IMR-90 (cell line): ENCODE measurements at regions of chr3 and their contacts with region 1.

Region 1: GRCh38 chr3:87766726-87767125 is 292.1 kb downstream of the CGGBP1 start:
- DNase-seq: no peak
- ATAC-seq: no peak
- H3K4me3 ChIP-seq: no peak overlapping the region
- H3K27ac ChIP-seq: no peak overlapping the region
- H3K4me1 ChIP-seq: no peaks in the 10 kb centered on the region
- H3K27me3 ChIP-seq: no peaks in the 10 kb centered on the region
- CTCF ChIP-seq: no peak
- POLR2A ChIP-seq: no peak
- RAD21 ChIP-seq: no peak

Region 2: DNA sequence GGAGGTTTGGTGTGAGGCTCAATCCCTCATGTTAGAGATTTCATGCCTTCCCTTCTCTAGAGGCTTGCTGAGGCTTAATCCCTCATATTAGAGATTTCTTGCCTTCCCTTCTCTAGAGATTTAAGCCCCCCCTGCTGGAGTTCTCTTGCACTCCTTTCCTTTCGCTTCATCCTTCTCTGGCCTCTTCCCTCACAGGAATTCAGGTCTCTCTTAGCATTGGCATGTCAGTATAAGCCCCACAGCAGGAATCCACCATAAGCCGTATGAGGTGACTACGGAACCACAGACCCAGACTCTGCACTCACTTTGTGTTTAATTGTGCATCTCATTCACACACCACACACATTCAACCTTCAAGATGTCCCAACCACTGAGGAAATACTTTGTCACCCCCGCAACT is 151.7 kb before region 1 on chr3:
- CTCF ChIA-PET with region 1: no interaction called
- POLR2A ChIA-PET with region 1: no interaction called
- dilution Hi-C with region 1: no loop called
- in situ Hi-C with region 1: no loop called
- intact Hi-C with region 1: loop called (anchors 2 kb)
- DNase-seq: no peak
- ATAC-seq: no peak
- H3K4me3 ChIP-seq: no peak overlapping the region
- H3K27ac ChIP-seq: no peak overlapping the region
- H3K4me1 ChIP-seq: no peaks in the 10 kb centered on the region
- H3K27me3 ChIP-seq: no peaks in the 10 kb centered on the region
- CTCF ChIP-seq: no peak
- POLR2A ChIP-seq: no peak
- RAD21 ChIP-seq: no peak